ENCODE measurements at regions of chr10 and their contacts with region 1.

Region 1: GRCh38 chr10:119299531-119299930 is 92.2 kb downstream of the GRK5 start:
- DNase-seq: no peak
- ATAC-seq: no peak
- H3K4me3 Mint-ChIP-seq: no peak overlapping the region
- H3K27ac Mint-ChIP-seq: no peak overlapping the region
- H3K4me1 Mint-ChIP-seq: peaks cover 55% of the 10 kb centered on the region
- H3K27me3 Mint-ChIP-seq: no peaks in the 10 kb centered on the region
- CTCF ChIP-seq: no peak

Region 2: GRCh38 chr10:119270762-119271366 is 28.7 kb before region 1 on chr10:
- CTCF ChIA-PET with region 1: interaction called, 4 read pairs
- POLR2A ChIA-PET with region 1: interaction called, 16 read pairs
- intact Hi-C with region 1: no loop called
- DNase-seq: peak; percentile 78
- ATAC-seq: peak; percentile 50
- H3K4me3 Mint-ChIP-seq: peak overlapping the region; percentile 31
- H3K27ac Mint-ChIP-seq: peak overlapping the region; percentile 91
- H3K4me1 Mint-ChIP-seq: peaks cover 54% of the 10 kb centered on the region
- H3K27me3 Mint-ChIP-seq: no peaks in the 10 kb centered on the region
- CTCF ChIP-seq: no peak

Region 3: GRCh38 chr10:119288574-119289001 is 10.9 kb before region 1 on chr10:
- CTCF ChIA-PET with region 1: interaction called, 3 read pairs
- POLR2A ChIA-PET with region 1: interaction called, 10 read pairs
- intact Hi-C with region 1: no loop called
- DNase-seq: no peak
- ATAC-seq: no peak
- H3K4me3 Mint-ChIP-seq: no peak overlapping the region
- H3K27ac Mint-ChIP-seq: no peak overlapping the region
- H3K4me1 Mint-ChIP-seq: peaks cover 79% of the 10 kb centered on the region
- H3K27me3 Mint-ChIP-seq: no peaks in the 10 kb centered on the region
- CTCF ChIP-seq: no peak

Measured in activated CD8-positive, alpha-beta T cell treated with anti-CD3 and anti-CD28 coated beads for 36 hours (primary cell).